CD4-positive, alpha-beta memory T cell (primary cell): ENCODE measurements at regions of chr12 and their contacts with region 1.

Region 1: GRCh38 chr12:31959161-31959700 is at the start of gene RESF1:
- DNase-seq: peak; percentile 88 to 90 (median 89)
- H3K4me3 ChIP-seq: peak within 1 kb of the TSS; percentile 95 to 100
- H3K4me3 Mint-ChIP-seq: peak within 1 kb of the TSS; percentile 94 to 98 (median 97)
- H3K27ac ChIP-seq: peak within 1 kb of the TSS; percentile 72
- H3K27ac Mint-ChIP-seq: peak within 1 kb of the TSS; percentile 94 to 98 (median 97)
- H3K4me1 ChIP-seq: peaks cover 61% of the 10 kb centered on the region
- H3K4me1 Mint-ChIP-seq: peaks cover 45 to 83% (median 57%) of the 10 kb centered on the region in 4 donors
- H3K27me3 ChIP-seq: no peaks in the 10 kb centered on the region
- H3K27me3 Mint-ChIP-seq: no peaks in the 10 kb centered on the region
- total RNA-seq, gene RESF1: 539 to 545 TPM

Region 2: GRCh38 chr12:31325877-31326631 is 633.2 kb before region 1 on chr12 and contains the start of gene SINHCAF:
- CTCF ChIA-PET with region 1: no interaction called
- POLR2A ChIA-PET with region 1: interaction called, 4 read pairs
- intact Hi-C with region 1: loop called (anchors 10 kb)
- DNase-seq: peak; percentile 97 to 99 (median 98)
- H3K4me3 ChIP-seq: peak within 1 kb of the TSS; percentile 88 to 89
- H3K4me3 Mint-ChIP-seq: peak within 1 kb of the TSS; percentile 88 to 99 (median 97)
- H3K27ac ChIP-seq: peak within 1 kb of the TSS; percentile 87
- H3K27ac Mint-ChIP-seq: peak within 1 kb of the TSS; percentile 93 to 99 (median 98)
- H3K4me1 ChIP-seq: peaks cover 25% of the 10 kb centered on the region
- H3K4me1 Mint-ChIP-seq: peaks cover 21 to 44% (median 27%) of the 10 kb centered on the region in 4 donors
- H3K27me3 ChIP-seq: no peaks in the 10 kb centered on the region
- H3K27me3 Mint-ChIP-seq: peaks cover 0 to 2% of the 10 kb centered on the region in 2 donors
- total RNA-seq, gene SINHCAF: 95.8 to 98.5 TPM

Region 3: GRCh38 chr12:31682136-31682962 is 276.9 kb before region 1 on chr12:
- CTCF ChIA-PET with region 1: interaction called, 19 read pairs
- POLR2A ChIA-PET with region 1: interaction called, 7 read pairs
- intact Hi-C with region 1: loop called (anchors 1 kb)
- DNase-seq: peak; percentile 68 to 73 (median 71)
- H3K4me3 ChIP-seq: no peak overlapping the region
- H3K4me3 Mint-ChIP-seq: peak overlapping the region in 4 of 8 donors; percentile 58 to 80 (median 71)
- H3K27ac ChIP-seq: no peak overlapping the region
- H3K27ac Mint-ChIP-seq: peak overlapping the region; percentile 53 to 92 (median 88)
- H3K4me1 ChIP-seq: no peaks in the 10 kb centered on the region
- H3K4me1 Mint-ChIP-seq: peaks cover 6 to 15% (median 9%) of the 10 kb centered on the region in 4 donors
- H3K27me3 ChIP-seq: no peaks in the 10 kb centered on the region
- H3K27me3 Mint-ChIP-seq: no peaks in the 10 kb centered on the region

Region 4: GRCh38 chr12:31804185-31804504 is 155.1 kb before region 1 on chr12:
- CTCF ChIA-PET with region 1: interaction called, 3 read pairs
- POLR2A ChIA-PET with region 1: interaction called, 13 read pairs
- intact Hi-C with region 1: loop called (anchors 5 kb)
- DNase-seq: no peak
- H3K4me3 ChIP-seq: no peak overlapping the region
- H3K4me3 Mint-ChIP-seq: peak overlapping the region; percentile 70 to 95 (median 83)
- H3K27ac ChIP-seq: no peak overlapping the region
- H3K27ac Mint-ChIP-seq: peak overlapping the region; percentile 75 to 94 (median 90)
- H3K4me1 ChIP-seq: peaks cover 37% of the 10 kb centered on the region
- H3K4me1 Mint-ChIP-seq: peaks cover 35 to 62% (median 50%) of the 10 kb centered on the region in 4 donors
- H3K27me3 ChIP-seq: no peaks in the 10 kb centered on the region
- H3K27me3 Mint-ChIP-seq: no peaks in the 10 kb centered on the region

Region 5: DNA sequence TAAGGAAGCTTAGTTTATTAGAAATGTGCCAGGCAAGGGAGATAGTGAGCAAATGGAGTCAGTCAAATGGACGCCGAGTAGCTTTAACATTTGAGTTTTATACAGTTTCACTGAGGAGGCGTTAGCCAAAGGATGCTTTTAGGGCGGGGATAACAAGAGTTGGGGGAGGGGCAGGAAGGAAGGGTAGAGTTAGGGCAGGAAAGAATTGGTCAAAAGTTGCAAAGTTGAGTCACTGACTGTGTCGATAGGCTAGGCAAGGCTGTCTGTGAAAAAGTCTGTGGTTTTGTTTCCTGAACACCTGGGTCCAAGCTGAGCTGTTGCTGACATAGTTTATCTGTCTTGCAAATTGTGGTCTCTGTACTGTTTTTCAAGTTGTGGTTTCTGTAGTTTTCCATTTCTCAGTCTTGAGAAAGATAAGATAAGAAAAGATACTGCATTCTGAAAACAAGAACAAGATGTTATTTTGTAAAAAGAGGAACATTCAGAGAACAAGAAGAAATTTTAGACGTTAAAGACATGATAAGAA is 62.7 kb before region 1 on chr12:
- CTCF ChIA-PET with region 1: interaction called, 25 read pairs
- POLR2A ChIA-PET with region 1: interaction called, 335 read pairs
- intact Hi-C with region 1: loop called (anchors 1 kb)
- DNase-seq: peak; percentile 88 to 95 (median 94)
- H3K4me3 ChIP-seq: peak overlapping the region; percentile 9 to 22
- H3K4me3 Mint-ChIP-seq: peak overlapping the region; percentile 63 to 88 (median 74)
- H3K27ac ChIP-seq: peak overlapping the region; percentile 55
- H3K27ac Mint-ChIP-seq: peak overlapping the region; percentile 91 to 99 (median 97)
- H3K4me1 ChIP-seq: peaks cover 75% of the 10 kb centered on the region
- H3K4me1 Mint-ChIP-seq: peaks cover 34 to 78% (median 49%) of the 10 kb centered on the region in 4 donors
- H3K27me3 ChIP-seq: no peaks in the 10 kb centered on the region
- H3K27me3 Mint-ChIP-seq: no peaks in the 10 kb centered on the region

Region 6: GRCh38 chr12:31973818-31974217 is 14.6 kb after region 1 on chr12:
- CTCF ChIA-PET with region 1: interaction called, 11 read pairs
- POLR2A ChIA-PET with region 1: interaction called, 26 read pairs
- intact Hi-C with region 1: loop called (anchors 1 kb)
- DNase-seq: no peak
- H3K4me3 ChIP-seq: no peak overlapping the region
- H3K4me3 Mint-ChIP-seq: peak overlapping the region in 1 of 8 donors; percentile 4
- H3K27ac ChIP-seq: no peak overlapping the region
- H3K27ac Mint-ChIP-seq: peak overlapping the region in 3 of 7 donors; percentile 52 to 66 (median 65)
- H3K4me1 ChIP-seq: peaks cover 30% of the 10 kb centered on the region
- H3K4me1 Mint-ChIP-seq: peaks cover 15 to 43% (median 25%) of the 10 kb centered on the region in 4 donors
- H3K27me3 ChIP-seq: no peaks in the 10 kb centered on the region
- H3K27me3 Mint-ChIP-seq: no peaks in the 10 kb centered on the region

Region 7: GRCh38 chr12:32015036-32015435 is 55.8 kb after region 1 on chr12:
- CTCF ChIA-PET with region 1: no interaction called
- POLR2A ChIA-PET with region 1: no interaction called
- intact Hi-C with region 1: no loop called
- DNase-seq: no peak
- H3K4me3 ChIP-seq: no peak overlapping the region
- H3K4me3 Mint-ChIP-seq: no peak overlapping the region
- H3K27ac ChIP-seq: no peak overlapping the region
- H3K27ac Mint-ChIP-seq: no peak overlapping the region
- H3K4me1 ChIP-seq: no peaks in the 10 kb centered on the region
- H3K4me1 Mint-ChIP-seq: peaks cover 0 to 2% (median under 1%) of the 10 kb centered on the region in 4 donors
- H3K27me3 ChIP-seq: no peaks in the 10 kb centered on the region
- H3K27me3 Mint-ChIP-seq: no peaks in the 10 kb centered on the region

Region 8: DNA sequence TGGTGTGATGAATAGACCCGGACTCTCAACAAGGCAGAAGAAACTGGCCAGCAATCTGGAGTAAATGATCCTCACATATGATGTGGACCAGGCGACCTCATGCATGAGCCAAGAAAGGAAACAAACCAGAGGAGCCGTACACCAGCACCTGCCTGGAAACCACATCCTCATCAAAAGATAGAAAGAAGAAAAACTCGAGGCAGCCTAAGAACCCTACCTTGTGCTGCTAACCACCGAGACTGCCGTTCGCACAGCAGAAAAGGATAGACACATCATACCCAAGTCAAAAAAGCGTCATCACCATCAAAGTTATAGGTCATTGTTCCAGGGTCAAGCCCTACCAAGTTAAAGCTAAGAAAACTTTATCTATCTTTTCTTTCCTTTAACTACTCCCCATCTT is 66.7 kb after region 1 on chr12:
- CTCF ChIA-PET with region 1: no interaction called
- POLR2A ChIA-PET with region 1: no interaction called
- intact Hi-C with region 1: loop called (anchors 2 kb)
- DNase-seq: peak; percentile 60 to 75 (median 70)
- H3K4me3 ChIP-seq: no peak overlapping the region
- H3K4me3 Mint-ChIP-seq: peak overlapping the region in 7 of 8 donors; percentile 10 to 78 (median 31)
- H3K27ac ChIP-seq: no peak overlapping the region
- H3K27ac Mint-ChIP-seq: peak overlapping the region; percentile 5 to 91 (median 83)
- H3K4me1 ChIP-seq: peaks cover 22% of the 10 kb centered on the region
- H3K4me1 Mint-ChIP-seq: peaks cover 15 to 26% (median 19%) of the 10 kb centered on the region in 4 donors
- H3K27me3 ChIP-seq: no peaks in the 10 kb centered on the region
- H3K27me3 Mint-ChIP-seq: no peaks in the 10 kb centered on the region

Region 9: DNA sequence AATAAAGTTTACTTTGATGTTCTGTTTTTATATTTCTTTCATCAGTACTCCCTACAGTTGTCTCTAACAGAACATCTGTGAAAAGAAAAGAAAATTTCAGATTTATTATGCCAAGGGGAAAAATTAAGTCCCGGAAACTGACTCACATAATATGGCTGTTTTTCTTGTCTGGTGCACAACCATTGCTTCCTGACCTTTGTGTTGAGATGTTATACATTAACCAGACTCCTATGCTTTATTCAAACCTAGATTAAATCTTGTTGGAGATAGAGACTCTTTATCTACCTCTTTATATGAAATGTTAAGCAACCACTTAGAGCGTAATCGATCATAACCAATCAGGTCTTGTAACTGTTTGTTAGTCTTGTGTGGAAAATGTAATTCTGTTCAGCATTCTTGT is 109.8 kb after region 1 on chr12:
- CTCF ChIA-PET with region 1: no interaction called
- POLR2A ChIA-PET with region 1: no interaction called
- intact Hi-C with region 1: no loop called
- DNase-seq: no peak
- H3K4me3 ChIP-seq: no peak overlapping the region
- H3K4me3 Mint-ChIP-seq: no peak overlapping the region
- H3K27ac ChIP-seq: no peak overlapping the region
- H3K27ac Mint-ChIP-seq: no peak overlapping the region
- H3K4me1 ChIP-seq: no peaks in the 10 kb centered on the region
- H3K4me1 Mint-ChIP-seq: peaks cover 0 to 3% (median 0%) of the 10 kb centered on the region in 4 donors
- H3K27me3 ChIP-seq: no peaks in the 10 kb centered on the region
- H3K27me3 Mint-ChIP-seq: no peaks in the 10 kb centered on the region

Region 10: GRCh38 chr12:32115404-32116104 is 156.3 kb after region 1 on chr12:
- CTCF ChIA-PET with region 1: no interaction called
- POLR2A ChIA-PET with region 1: no interaction called
- intact Hi-C with region 1: no loop called
- DNase-seq: no peak
- H3K4me3 ChIP-seq: no peak overlapping the region
- H3K4me3 Mint-ChIP-seq: no peak overlapping the region
- H3K27ac ChIP-seq: no peak overlapping the region
- H3K27ac Mint-ChIP-seq: peak overlapping the region in 3 of 7 donors; percentile 18 to 60 (median 40)
- H3K4me1 ChIP-seq: no peaks in the 10 kb centered on the region
- H3K4me1 Mint-ChIP-seq: peaks cover 0 to 17% (median 8%) of the 10 kb centered on the region in 4 donors
- H3K27me3 ChIP-seq: no peaks in the 10 kb centered on the region
- H3K27me3 Mint-ChIP-seq: no peaks in the 10 kb centered on the region

Region 11: DNA sequence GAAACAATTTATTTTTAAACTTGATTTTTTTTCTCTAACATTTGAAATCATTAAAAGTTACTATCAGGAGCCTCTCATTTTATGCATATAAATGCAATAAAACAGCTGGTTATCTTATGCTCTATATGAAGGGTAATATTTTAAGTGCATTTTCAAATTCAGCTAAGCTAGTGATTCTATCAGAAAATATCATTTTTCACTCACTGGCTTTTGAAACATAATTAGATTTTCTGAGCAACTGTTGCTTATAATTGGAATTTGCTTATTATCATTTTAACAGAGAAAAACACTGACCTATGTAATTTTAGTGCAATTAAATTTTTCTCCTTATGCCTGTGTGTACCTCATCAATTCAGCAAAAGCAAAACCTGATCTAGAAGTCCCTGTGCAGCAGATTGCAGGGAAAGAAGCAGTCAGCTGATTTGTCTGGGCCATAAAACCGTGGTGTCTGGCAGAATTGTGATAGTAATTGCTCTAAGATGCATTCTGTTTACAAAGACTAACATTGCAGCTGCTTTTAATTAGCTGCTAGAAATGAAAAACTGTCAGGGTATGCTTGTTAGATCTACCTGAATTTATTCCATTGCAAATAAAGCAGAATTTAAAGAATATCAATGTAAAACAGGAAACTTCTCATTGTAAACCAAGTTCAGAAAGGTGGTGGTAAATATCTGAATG is 222.4 kb after region 1 on chr12:
- CTCF ChIA-PET with region 1: no interaction called
- POLR2A ChIA-PET with region 1: no interaction called
- intact Hi-C with region 1: no loop called
- DNase-seq: no peak
- H3K4me3 ChIP-seq: no peak overlapping the region
- H3K4me3 Mint-ChIP-seq: no peak overlapping the region
- H3K27ac ChIP-seq: no peak overlapping the region
- H3K27ac Mint-ChIP-seq: no peak overlapping the region
- H3K4me1 ChIP-seq: no peaks in the 10 kb centered on the region
- H3K4me1 Mint-ChIP-seq: peaks cover 0 to 1% (median 0%) of the 10 kb centered on the region in 4 donors
- H3K27me3 ChIP-seq: no peaks in the 10 kb centered on the region
- H3K27me3 Mint-ChIP-seq: no peaks in the 10 kb centered on the region